ENCODE measurements at regions of chr22 and their contacts with region 1.

Region 1: DNA sequence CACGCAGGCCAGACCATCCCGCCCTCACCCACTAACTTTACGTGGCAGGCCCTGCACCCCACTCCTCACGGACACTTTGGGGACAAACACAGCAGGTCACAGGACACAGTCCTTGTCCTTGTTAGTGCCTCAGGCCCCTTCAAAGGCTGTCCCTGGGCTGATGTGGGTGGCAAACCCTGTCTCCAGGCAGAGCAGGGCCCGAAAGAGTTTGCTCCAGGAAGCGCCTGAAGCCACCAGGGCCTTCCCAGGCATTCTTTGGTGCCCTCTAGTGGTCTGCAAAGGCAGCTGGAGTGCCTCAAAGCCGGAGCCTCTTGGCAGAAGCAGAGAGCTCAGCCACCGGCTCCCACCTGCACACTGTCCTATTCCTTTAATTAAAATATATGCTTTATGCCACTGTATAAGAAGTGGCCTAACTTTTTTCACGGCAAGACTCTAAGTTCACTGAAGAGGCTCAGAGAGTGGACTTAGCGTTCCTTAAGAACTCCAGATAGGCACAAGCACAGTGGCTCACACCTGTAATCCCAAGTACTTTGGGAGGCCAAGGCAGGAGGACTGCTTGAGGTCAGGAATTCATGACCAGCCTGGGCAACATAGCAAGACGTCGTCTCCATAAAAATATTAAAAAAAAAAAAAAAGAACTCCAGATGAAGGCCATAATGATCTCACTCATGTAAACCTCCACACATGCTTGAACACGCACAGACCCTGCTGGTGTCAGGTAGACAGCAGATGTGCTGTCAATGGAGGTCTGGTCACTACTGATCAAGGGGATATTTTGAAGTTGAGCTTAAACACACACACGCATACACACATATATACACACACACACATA is 11.1 kb downstream of the TXN2 start:
- DNase-seq: no peak
- H3K4me3 ChIP-seq: peak overlapping the region; percentile 34 to 46 (median 40)
- H3K27ac ChIP-seq: peak overlapping the region; percentile 89 to 97 (median 92)
- H3K4me1 ChIP-seq: peaks cover 58 to 100% (median 92%) of the 10 kb centered on the region in 4 donors
- H3K27me3 ChIP-seq: no peaks in the 10 kb centered on the region
- CTCF ChIP-seq: peak in 2 of 3 experiments; percentile 92 to 97
- EP300 ChIP-seq: no peak
- POLR2A ChIP-seq: no peak

Region 2: DNA sequence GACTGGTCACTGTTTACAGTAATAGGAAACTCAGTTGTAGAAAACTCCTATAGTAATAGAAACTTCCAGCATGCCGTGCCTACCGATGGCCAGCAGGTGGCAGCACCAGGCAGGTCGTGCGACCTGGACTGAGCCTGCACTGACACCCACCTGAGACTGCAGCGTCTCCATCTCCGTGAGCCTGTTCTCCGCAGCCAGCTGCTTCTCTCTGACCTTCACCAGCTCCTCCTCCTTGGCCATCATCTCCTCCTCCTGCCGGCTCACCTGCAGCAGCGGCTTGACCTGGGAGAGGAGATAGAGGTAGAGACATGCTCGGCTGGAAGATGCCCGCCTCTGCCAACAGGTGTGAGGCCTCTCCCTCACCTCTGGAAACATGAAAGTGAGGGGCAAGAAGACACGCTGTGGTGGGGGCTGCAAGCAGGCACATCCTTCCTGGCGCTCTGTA is 169.0 kb before region 1 on chr22:
- intact Hi-C with region 1: loop called (anchors 2 kb)
- DNase-seq: no peak
- H3K4me3 ChIP-seq: no peak overlapping the region
- H3K27ac ChIP-seq: peak overlapping the region; percentile 78 to 89 (median 84)
- H3K4me1 ChIP-seq: peaks cover 0 to 60% (median 55%) of the 10 kb centered on the region in 4 donors
- H3K27me3 ChIP-seq: no peaks in the 10 kb centered on the region
- CTCF ChIP-seq: peak; percentile 97 to 98 (median 97)
- EP300 ChIP-seq: no peak
- POLR2A ChIP-seq: no peak

Region 3: GRCh38 chr22:36331306-36331911 is 139.0 kb before region 1 on chr22:
- intact Hi-C with region 1: loop called (anchors 5 kb)
- DNase-seq: peak; percentile 97
- H3K4me3 ChIP-seq: peak overlapping the region; percentile 3 to 15 (median 10)
- H3K27ac ChIP-seq: peak overlapping the region; percentile 95 to 100 (median 98)
- H3K4me1 ChIP-seq: peaks cover 100% of the 10 kb centered on the region in 4 donors
- H3K27me3 ChIP-seq: no peaks in the 10 kb centered on the region
- CTCF ChIP-seq: no peak
- EP300 ChIP-seq: no peak
- POLR2A ChIP-seq: no peak

Region 4: GRCh38 chr22:36387752-36388518 is 82.4 kb before region 1 on chr22 and contains the start of gene MYH9:
- intact Hi-C with region 1: loop called (anchors 5 kb)
- DNase-seq: peak; percentile 100
- H3K4me3 ChIP-seq: peak within 1 kb of the TSS; percentile 73 to 94 (median 84)
- H3K27ac ChIP-seq: peak within 1 kb of the TSS; percentile 95 to 100 (median 98)
- H3K4me1 ChIP-seq: peaks cover 16 to 51% (median 37%) of the 10 kb centered on the region in 4 donors
- H3K27me3 ChIP-seq: no peaks in the 10 kb centered on the region
- CTCF ChIP-seq: peak in 1 of 3 experiments; percentile 3
- EP300 ChIP-seq: no peak
- POLR2A ChIP-seq: peak; percentile 99
- total RNA-seq, gene MYH9: 241 to 387 (median 358) TPM

Region 5: GRCh38 chr22:36546092-36546804 is 75.9 kb after region 1 on chr22:
- intact Hi-C with region 1: no loop called
- DNase-seq: no peak
- H3K4me3 ChIP-seq: no peak overlapping the region
- H3K27ac ChIP-seq: no peak overlapping the region
- H3K4me1 ChIP-seq: no peaks in the 10 kb centered on the region
- H3K27me3 ChIP-seq: peaks cover 0 to 56% (median 5%) of the 10 kb centered on the region in 4 donors
- CTCF ChIP-seq: peak; percentile 30 to 56 (median 48)
- EP300 ChIP-seq: no peak
- POLR2A ChIP-seq: no peak

Measured in esophagus muscularis mucosa (tissue), 4 donors.